ENCODE measurements at regions of chr12 and their contacts with region 1.

Region 1: GRCh38 chr12:82685790-82686167 is 927 bp upstream of the TMTC2 start:
- DNase-seq: peak; percentile 95
- H3K4me3 ChIP-seq: peak overlapping the region; percentile 69
- H3K27ac ChIP-seq: peak overlapping the region; percentile 54
- H3K4me1 ChIP-seq: peaks cover 20% of the 10 kb centered on the region
- H3K27me3 ChIP-seq: no peaks in the 10 kb centered on the region
- CTCF ChIP-seq: peak; percentile 91

Region 2: GRCh38 chr12:82486524-82487235 is 199.1 kb before region 1 on chr12:
- CTCF ChIA-PET with region 1: no interaction called
- POLR2A ChIA-PET with region 1: no interaction called
- intact Hi-C with region 1: no loop called
- DNase-seq: no peak
- H3K4me3 ChIP-seq: no peak overlapping the region
- H3K27ac ChIP-seq: no peak overlapping the region
- H3K4me1 ChIP-seq: no peaks in the 10 kb centered on the region
- H3K27me3 ChIP-seq: no peaks in the 10 kb centered on the region
- CTCF ChIP-seq: no peak

Region 3: GRCh38 chr12:82793751-82794281 is 108.0 kb after region 1 on chr12:
- CTCF ChIA-PET with region 1: no interaction called
- POLR2A ChIA-PET with region 1: no interaction called
- intact Hi-C with region 1: loop called (anchors 10 kb)
- DNase-seq: peak; percentile 87
- H3K4me3 ChIP-seq: no peak overlapping the region
- H3K27ac ChIP-seq: no peak overlapping the region
- H3K4me1 ChIP-seq: peaks cover 18% of the 10 kb centered on the region
- H3K27me3 ChIP-seq: peaks cover 3% of the 10 kb centered on the region
- CTCF ChIP-seq: no peak

Region 4: DNA sequence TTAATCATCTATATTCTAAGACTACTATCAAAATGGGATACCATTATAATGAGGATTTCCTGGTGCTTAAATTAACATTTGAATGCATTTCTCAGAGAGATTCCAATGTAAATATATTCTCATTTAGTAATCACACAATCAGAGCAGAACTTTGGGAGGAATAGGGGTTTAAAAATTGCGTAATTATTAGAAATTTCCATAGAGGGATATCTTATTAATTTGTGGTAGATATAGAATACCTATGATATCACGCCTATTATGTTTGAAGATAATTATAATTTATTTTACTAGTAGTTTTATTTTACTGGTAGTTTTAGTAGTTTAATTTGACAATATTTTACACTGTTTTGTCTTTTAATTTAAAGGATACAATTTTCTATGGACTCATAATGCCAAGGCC is 242.4 kb after region 1 on chr12:
- CTCF ChIA-PET with region 1: no interaction called
- POLR2A ChIA-PET with region 1: no interaction called
- intact Hi-C with region 1: loop called (anchors 2 kb)
- DNase-seq: peak; percentile 33
- H3K4me3 ChIP-seq: no peak overlapping the region
- H3K27ac ChIP-seq: no peak overlapping the region
- H3K4me1 ChIP-seq: peaks cover 38% of the 10 kb centered on the region
- H3K27me3 ChIP-seq: no peaks in the 10 kb centered on the region
- CTCF ChIP-seq: no peak

Region 5: GRCh38 chr12:82981162-82981561 is 295.4 kb after region 1 on chr12:
- CTCF ChIA-PET with region 1: no interaction called
- POLR2A ChIA-PET with region 1: no interaction called
- intact Hi-C with region 1: loop called (anchors 5 kb)
- DNase-seq: no peak
- H3K4me3 ChIP-seq: no peak overlapping the region
- H3K27ac ChIP-seq: peak overlapping the region; percentile 2
- H3K4me1 ChIP-seq: peaks cover 16% of the 10 kb centered on the region
- H3K27me3 ChIP-seq: no peaks in the 10 kb centered on the region
- CTCF ChIP-seq: no peak

Region 6: GRCh38 chr12:83389237-83389996 is 703.6 kb after region 1 on chr12:
- CTCF ChIA-PET with region 1: interaction called, 4 read pairs
- POLR2A ChIA-PET with region 1: no interaction called
- intact Hi-C with region 1: loop called (anchors 10 kb)
- DNase-seq: peak; percentile 30
- H3K4me3 ChIP-seq: no peak overlapping the region
- H3K27ac ChIP-seq: no peak overlapping the region
- H3K4me1 ChIP-seq: no peaks in the 10 kb centered on the region
- H3K27me3 ChIP-seq: no peaks in the 10 kb centered on the region
- CTCF ChIP-seq: peak; percentile 45; the same call in 1 of the 2 replicates

Region 7: DNA sequence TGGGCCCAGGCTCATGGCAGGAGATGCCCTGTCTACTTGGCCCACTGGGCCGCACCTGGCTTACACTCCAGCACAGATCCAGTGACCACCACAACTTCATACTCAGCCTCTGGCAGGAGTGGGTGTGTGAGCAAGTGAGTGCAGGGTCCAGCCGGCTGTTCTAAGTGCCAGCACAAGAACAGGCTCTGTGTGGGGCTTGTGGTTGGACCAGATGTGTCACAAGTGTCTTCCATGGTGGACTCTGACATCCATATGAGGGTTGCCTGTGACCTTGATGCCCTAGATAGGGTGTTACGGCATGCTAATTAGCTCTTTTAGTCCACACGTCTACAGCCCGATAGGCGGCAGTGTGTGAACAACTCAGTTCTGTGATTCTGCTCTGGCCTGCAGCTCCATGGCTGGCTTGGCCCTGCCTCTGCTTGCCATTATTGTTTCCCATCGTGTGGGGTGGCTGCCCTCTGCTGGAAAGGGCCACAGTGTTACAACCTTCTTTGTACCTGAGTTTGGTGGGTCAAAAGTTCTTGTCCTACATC is 1137.7 kb after region 1 on chr12:
- CTCF ChIA-PET with region 1: interaction called, 10 read pairs
- POLR2A ChIA-PET with region 1: no interaction called
- intact Hi-C with region 1: loop called (anchors 2 kb)
- DNase-seq: peak; percentile 67
- H3K4me3 ChIP-seq: no peak overlapping the region
- H3K27ac ChIP-seq: no peak overlapping the region
- H3K4me1 ChIP-seq: no peaks in the 10 kb centered on the region
- H3K27me3 ChIP-seq: no peaks in the 10 kb centered on the region
- CTCF ChIP-seq: peak; percentile 67